ENCODE measurements at regions of chr1 and their contacts with region 1.

Region 1: DNA sequence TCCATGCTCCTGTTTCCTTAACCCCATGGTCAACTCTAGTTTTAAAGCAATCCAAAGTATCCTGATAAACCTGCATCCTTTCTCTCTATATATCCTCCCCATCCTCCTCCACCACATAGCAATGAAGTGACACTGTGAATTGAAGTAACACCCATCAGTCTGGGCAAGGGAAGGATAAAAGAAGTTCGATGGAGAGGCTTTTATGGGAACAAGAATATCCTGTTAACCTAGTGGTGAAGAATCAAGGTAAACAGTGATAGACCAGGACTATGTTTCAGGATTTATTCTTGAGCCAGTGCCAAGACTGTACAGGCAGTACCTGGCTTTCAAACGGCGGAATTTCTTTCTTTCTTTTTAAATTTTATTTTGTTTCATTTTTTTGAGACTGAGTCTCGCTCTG is 17.6 kb downstream of the RABIF start:
- DNase-seq: no peak
- ATAC-seq: no peak
- H3K4me3 ChIP-seq: no peak overlapping the region
- H3K27ac ChIP-seq: no peak overlapping the region
- H3K4me1 ChIP-seq: no peaks in the 10 kb centered on the region
- H3K27me3 ChIP-seq: no peaks in the 10 kb centered on the region
- CTCF ChIP-seq: no peak

Region 2: DNA sequence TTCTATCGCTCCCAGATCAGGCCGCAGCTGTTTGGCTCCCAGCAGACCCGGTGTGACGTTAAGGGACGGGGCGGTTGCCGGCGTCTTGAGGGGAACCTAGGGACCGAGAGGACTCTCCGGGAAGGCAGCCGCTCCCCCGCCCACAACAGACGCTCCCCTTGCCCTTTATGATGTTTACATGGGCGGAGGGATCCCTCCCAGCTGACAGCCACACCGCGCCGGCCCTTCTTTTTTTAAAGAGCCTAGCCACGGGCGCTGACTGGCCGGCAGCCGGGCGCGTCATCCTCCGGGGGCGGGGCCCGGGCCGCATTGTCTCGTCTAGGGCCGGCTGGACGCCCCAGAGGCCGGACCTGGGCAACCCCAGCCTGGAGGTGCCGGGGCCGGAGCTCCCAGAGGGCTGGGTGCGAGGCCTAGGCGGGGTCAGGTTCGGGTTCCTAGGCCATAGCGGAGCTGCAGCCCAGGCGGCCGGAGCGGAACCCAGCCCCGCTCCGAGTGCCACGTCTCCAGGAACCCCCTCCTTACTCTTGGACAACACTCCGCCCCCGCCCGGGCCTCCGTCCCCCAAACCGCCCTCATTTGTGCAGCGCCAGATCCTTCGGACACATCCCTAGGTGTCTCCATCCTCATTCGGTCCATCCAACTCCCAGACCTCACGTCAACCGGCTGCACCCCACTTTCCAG is 60.6 kb before region 1 on chr1 and contains the start of gene PCAT6:
- intact Hi-C with region 1: loop called (anchors 10 kb)
- DNase-seq: peak; percentile 96
- ATAC-seq: peak; percentile 94
- H3K4me3 ChIP-seq: peak within 1 kb of the TSS; percentile 66
- H3K27ac ChIP-seq: peak within 1 kb of the TSS; percentile 87
- H3K4me1 ChIP-seq: peaks cover 24% of the 10 kb centered on the region
- H3K27me3 ChIP-seq: no peaks in the 10 kb centered on the region
- CTCF ChIP-seq: no peak
- total RNA-seq, gene PCAT6: 0.81 TPM

Measured in upper lobe of right lung (tissue), 1 donor.